CD8-positive, alpha-beta memory T cell (primary cell): ENCODE measurements at regions of chr5 and their contacts with region 1.

Region 1: DNA sequence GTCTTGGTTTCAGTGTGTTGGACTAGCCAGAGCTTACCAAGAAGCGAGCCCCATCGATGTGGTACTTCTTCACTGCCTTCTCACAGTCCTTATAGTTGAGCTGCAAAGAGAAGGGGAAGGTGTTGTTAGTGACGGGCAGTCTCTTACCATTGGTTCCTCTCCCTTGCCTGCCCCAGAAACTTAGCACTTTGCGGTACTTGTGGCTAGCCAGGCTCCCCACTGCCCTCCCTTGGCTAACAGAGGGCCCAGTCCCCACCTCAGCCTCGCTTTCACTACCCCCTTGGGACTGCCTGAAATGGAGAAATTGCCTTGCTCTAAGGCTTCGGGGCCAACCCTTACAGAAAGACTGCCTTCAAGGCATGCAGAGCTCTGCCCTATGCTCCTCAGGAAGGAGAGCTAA is 4.3 kb downstream of the LCP2 start:
- DNase-seq: peak in 4 of 5 donors; percentile 49 to 78 (median 70)
- H3K4me3 ChIP-seq: peak overlapping the region; percentile 100
- H3K4me3 Mint-ChIP-seq: peak overlapping the region; percentile 98 to 100 (median 99)
- H3K27ac ChIP-seq: peak overlapping the region; percentile 19
- H3K27ac Mint-ChIP-seq: peak overlapping the region; percentile 93 to 99 (median 96)
- H3K4me1 ChIP-seq: peaks cover 70% of the 10 kb centered on the region
- H3K4me1 Mint-ChIP-seq: peaks cover 66 to 77% (median 72%) of the 10 kb centered on the region in 3 donors
- H3K27me3 ChIP-seq: no peaks in the 10 kb centered on the region
- H3K27me3 Mint-ChIP-seq: no peaks in the 10 kb centered on the region

Region 2: DNA sequence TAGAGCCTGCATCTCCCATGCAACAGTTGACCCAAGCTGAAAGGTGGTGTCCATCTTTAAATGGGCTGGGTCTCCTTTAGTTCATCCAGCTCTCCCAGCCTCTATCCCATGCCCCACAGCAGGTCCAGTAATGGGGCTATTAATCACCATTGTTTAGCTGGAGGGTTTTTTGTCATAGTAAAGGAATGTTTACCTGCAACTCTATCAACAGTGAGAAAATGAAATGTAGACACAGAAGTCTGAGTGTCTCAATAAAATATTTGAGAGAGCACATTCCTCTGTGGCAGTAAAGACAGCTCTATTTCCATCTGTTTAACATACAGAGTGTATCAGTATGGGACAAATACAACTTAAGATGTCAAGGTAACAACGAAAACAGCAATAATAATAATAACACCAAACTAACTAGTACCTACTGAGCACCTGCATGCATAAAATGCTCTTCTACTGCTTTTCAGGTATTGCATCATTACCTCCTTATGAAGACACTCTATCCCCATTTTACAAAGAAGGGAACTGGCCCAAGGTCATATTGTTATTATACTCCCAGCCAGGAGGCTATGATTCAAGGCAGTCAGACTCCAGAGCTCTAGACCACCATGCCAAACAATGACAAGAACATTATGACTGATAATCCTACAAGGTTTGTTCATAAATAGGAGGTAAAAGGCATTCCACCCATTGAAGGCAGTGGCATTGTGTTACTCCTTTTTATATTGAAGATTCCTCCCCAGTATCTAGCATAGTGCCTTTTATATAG is 81.5 kb before region 1 on chr5:
- CTCF ChIA-PET with region 1: no interaction called
- POLR2A ChIA-PET with region 1: no interaction called
- DNase-seq: no peak
- H3K4me3 ChIP-seq: no peak overlapping the region
- H3K4me3 Mint-ChIP-seq: no peak overlapping the region
- H3K27ac ChIP-seq: no peak overlapping the region
- H3K27ac Mint-ChIP-seq: no peak overlapping the region
- H3K4me1 ChIP-seq: no peaks in the 10 kb centered on the region
- H3K4me1 Mint-ChIP-seq: no peaks in the 10 kb centered on the region
- H3K27me3 ChIP-seq: no peaks in the 10 kb centered on the region
- H3K27me3 Mint-ChIP-seq: peaks cover 10 to 53% of the 10 kb centered on the region in 2 donors

Region 3: GRCh38 chr5:170262061-170263045 is 30.9 kb before region 1 on chr5:
- CTCF ChIA-PET with region 1: interaction called, 182 read pairs
- POLR2A ChIA-PET with region 1: interaction called, 13 read pairs
- DNase-seq: peak in 4 of 5 donors; percentile 40 to 88 (median 78)
- H3K4me3 ChIP-seq: no peak overlapping the region
- H3K4me3 Mint-ChIP-seq: peak overlapping the region; percentile 54 to 80 (median 76)
- H3K27ac ChIP-seq: no peak overlapping the region
- H3K27ac Mint-ChIP-seq: peak overlapping the region; percentile 91 to 98 (median 96)
- H3K4me1 ChIP-seq: peaks cover 76% of the 10 kb centered on the region
- H3K4me1 Mint-ChIP-seq: peaks cover 80 to 91% (median 91%) of the 10 kb centered on the region in 3 donors
- H3K27me3 ChIP-seq: no peaks in the 10 kb centered on the region
- H3K27me3 Mint-ChIP-seq: peaks cover 0 to 2% of the 10 kb centered on the region in 2 donors

Region 4: DNA sequence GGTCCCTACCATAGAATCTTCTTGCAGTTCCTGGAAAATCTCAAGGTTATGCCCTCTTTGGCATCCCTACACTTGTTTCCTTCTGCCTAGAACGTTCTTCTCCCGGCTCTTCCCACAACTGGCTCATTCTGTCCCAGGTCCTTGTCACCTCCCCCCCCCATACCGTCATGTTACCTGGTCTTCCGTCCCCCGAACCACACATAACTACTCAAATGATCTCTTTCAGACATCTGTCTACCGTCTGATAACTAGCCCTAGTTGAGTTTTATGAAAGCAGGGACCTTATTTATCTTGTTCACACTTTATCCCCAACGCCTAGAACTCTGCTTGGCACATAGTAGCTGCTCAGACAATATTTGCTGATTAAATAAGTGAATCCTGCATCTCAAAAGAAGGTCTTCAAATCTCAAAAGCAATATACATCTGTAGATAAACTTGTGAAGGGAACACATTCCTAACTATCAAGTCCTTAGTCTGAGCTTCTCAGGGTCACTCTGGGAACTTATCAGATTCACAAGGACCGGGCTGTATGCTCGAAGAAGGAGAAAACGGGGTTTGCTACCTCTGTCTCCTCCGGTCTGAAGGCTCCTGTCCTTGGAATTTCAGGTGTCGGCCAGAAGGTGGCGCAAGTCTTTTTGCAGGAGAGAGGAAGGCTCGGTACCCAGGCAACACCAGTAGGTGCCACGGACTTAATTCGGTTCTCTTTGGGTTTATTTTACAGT is 25.7 kb before region 1 on chr5:
- CTCF ChIA-PET with region 1: interaction called, 292 read pairs
- POLR2A ChIA-PET with region 1: interaction called, 290 read pairs
- DNase-seq: peak; percentile 72 to 87 (median 78)
- H3K4me3 ChIP-seq: peak overlapping the region; percentile 35
- H3K4me3 Mint-ChIP-seq: peak overlapping the region; percentile 64 to 83 (median 70)
- H3K27ac ChIP-seq: peak overlapping the region; percentile 2
- H3K27ac Mint-ChIP-seq: peak overlapping the region; percentile 93 to 99 (median 96)
- H3K4me1 ChIP-seq: peaks cover 90% of the 10 kb centered on the region
- H3K4me1 Mint-ChIP-seq: peaks cover 86 to 97% (median 93%) of the 10 kb centered on the region in 3 donors
- H3K27me3 ChIP-seq: no peaks in the 10 kb centered on the region
- H3K27me3 Mint-ChIP-seq: peaks cover 0 to 2% of the 10 kb centered on the region in 2 donors

Region 5: DNA sequence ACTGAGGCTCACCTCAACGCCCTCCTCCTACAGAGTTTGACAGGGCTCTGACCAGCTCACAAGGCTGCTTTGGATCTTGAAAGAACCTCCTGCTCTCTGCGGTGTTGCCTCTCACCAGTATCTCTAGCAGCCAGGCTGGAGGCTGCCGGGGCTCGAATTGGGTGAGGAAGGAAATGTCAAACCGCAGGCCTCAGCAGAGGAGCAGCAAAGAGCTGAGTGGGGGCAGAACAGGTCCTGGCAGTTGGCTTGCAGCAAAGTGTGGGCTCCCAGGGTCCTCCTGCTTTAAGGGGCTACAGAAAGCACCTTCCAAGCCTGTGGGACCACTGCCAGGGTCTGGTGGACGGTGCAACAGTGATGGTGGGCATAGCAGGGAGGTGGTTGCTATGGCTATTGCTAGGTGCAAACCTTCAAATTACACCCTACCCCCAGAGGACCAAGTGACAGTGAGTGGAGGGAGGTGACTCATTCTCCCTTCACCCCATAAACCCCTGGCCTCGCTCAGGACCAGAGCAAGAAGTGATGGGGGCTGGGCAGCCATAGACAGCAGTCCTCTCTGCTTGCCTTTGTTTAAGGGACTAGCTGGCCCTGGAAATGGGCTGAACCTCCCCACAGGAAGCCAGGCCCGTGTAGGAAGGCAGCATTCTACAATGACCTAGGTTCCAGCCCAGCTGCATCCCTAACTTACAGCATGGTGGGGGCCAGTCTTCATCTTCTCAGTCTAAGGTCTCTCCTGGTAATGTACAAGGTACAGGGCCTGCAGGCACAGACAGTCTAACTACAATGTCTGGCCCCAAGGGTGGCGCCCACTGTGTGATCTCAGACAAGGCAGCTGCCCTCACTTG is 14.4 kb before region 1 on chr5:
- CTCF ChIA-PET with region 1: interaction called, 292 read pairs
- POLR2A ChIA-PET with region 1: interaction called, 290 read pairs
- DNase-seq: peak; percentile 74 to 96 (median 93)
- H3K4me3 ChIP-seq: peak overlapping the region; percentile 55
- H3K4me3 Mint-ChIP-seq: peak overlapping the region; percentile 63 to 89 (median 85)
- H3K27ac ChIP-seq: peak overlapping the region; percentile 65
- H3K27ac Mint-ChIP-seq: peak overlapping the region; percentile 93 to 99 (median 97)
- H3K4me1 ChIP-seq: peaks cover 96% of the 10 kb centered on the region
- H3K4me1 Mint-ChIP-seq: peaks cover 94 to 99% (median 99%) of the 10 kb centered on the region in 3 donors
- H3K27me3 ChIP-seq: no peaks in the 10 kb centered on the region
- H3K27me3 Mint-ChIP-seq: peaks cover 0 to 1% of the 10 kb centered on the region in 2 donors

Region 6: DNA sequence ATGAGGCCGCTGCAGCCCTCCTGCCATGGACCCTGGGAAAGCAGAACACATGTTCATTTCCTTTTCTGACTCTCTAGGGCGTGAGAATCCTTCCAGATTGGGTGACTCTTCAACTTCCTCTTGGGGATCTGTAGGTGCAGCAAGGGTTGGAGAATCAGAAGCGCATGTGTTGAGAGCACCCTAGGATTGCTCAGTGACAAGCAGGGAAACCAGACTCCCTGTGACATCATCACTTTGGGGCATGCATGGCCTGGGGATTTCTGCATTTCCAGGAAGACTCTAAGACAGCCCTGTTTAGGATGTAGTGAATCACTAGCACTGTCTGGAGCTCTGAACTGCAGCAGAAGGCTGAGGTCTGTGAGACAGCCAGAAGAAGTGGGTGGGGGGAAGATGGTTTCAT is 19.4 kb after region 1 on chr5:
- CTCF ChIA-PET with region 1: interaction called, 10 read pairs
- POLR2A ChIA-PET with region 1: interaction called, 7 read pairs
- DNase-seq: peak in 3 of 5 donors; percentile 36 to 71 (median 43)
- H3K4me3 ChIP-seq: peak overlapping the region; percentile 9
- H3K4me3 Mint-ChIP-seq: peak overlapping the region; percentile 8 to 77 (median 70)
- H3K27ac ChIP-seq: no peak overlapping the region
- H3K27ac Mint-ChIP-seq: peak overlapping the region; percentile 61 to 95 (median 87)
- H3K4me1 ChIP-seq: peaks cover 58% of the 10 kb centered on the region
- H3K4me1 Mint-ChIP-seq: peaks cover 33 to 58% (median 41%) of the 10 kb centered on the region in 3 donors
- H3K27me3 ChIP-seq: no peaks in the 10 kb centered on the region
- H3K27me3 Mint-ChIP-seq: no peaks in the 10 kb centered on the region